ENCODE measurements at regions of chr20 and their contacts with region 1.

Region 1: GRCh38 chr20:17273717-17274116 is 46.9 kb downstream of the PCSK2 start:
- DNase-seq: no peak
- H3K4me3 ChIP-seq: no peak overlapping the region
- H3K27ac ChIP-seq: no peak overlapping the region
- H3K4me1 ChIP-seq: no peaks in the 10 kb centered on the region
- H3K27me3 ChIP-seq: no peaks in the 10 kb centered on the region
- CTCF ChIP-seq: no peak
- EP300 ChIP-seq: no peak
- POLR2A ChIP-seq: no peak

Region 2: DNA sequence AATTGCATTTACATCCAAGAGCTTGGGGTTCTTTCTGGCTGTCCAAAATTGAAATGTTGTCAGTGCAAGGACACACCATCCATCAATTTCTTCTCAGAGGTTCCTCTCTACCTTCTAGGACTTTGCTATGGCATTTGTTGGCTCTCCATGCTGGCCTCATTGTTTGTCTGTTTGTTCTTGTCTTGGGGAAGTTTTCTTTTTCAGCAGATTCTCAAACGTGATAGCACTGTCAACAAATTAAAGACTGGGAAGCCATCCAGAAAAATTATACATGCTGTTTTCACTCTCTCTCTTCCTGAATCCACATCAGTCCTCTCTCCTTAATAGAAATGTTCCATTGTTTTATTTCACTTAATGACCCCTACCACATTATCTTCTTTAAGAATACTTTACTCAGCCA is 83.5 kb after region 1 on chr20:
- in situ Hi-C with region 1: loop called in 1 of 4 experiments (anchors 25 kb)
- intact Hi-C with region 1: no loop called
- DNase-seq: no peak
- H3K4me3 ChIP-seq: no peak overlapping the region
- H3K27ac ChIP-seq: no peak overlapping the region
- H3K4me1 ChIP-seq: no peaks in the 10 kb centered on the region
- H3K27me3 ChIP-seq: no peaks in the 10 kb centered on the region
- CTCF ChIP-seq: no peak
- EP300 ChIP-seq: no peak
- POLR2A ChIP-seq: no peak

Region 3: GRCh38 chr20:18507218-18508021 is 1233.7 kb after region 1 on chr20 and contains the start of gene SEC23B:
- in situ Hi-C with region 1: no loop called
- intact Hi-C with region 1: no loop called
- DNase-seq: peak; percentile 99
- H3K4me3 ChIP-seq: peak within 1 kb of the TSS; percentile 53 to 85 (median 80)
- H3K27ac ChIP-seq: peak within 1 kb of the TSS; percentile 94 to 98 (median 96)
- H3K4me1 ChIP-seq: peaks cover 0 to 31% (median 10%) of the 10 kb centered on the region in 4 donors
- H3K27me3 ChIP-seq: peaks cover 9% of the 10 kb centered on the region
- CTCF ChIP-seq: no peak
- EP300 ChIP-seq: no peak
- POLR2A ChIP-seq: peak; percentile 87
- total RNA-seq, gene SEC23B: 16.8 to 38.0 (median 30.9) TPM